ENCODE measurements at regions of chr10 and their contacts with region 1.

Region 1: GRCh38 chr10:30231071-30231652 is 117.9 kb downstream of the MTPAP start:
- DNase-seq: no peak
- H3K4me3 ChIP-seq: no peak overlapping the region
- H3K27ac ChIP-seq: no peak overlapping the region
- H3K4me1 ChIP-seq: no peaks in the 10 kb centered on the region
- H3K27me3 ChIP-seq: no peaks in the 10 kb centered on the region
- CTCF ChIP-seq: no peak
- EP300 ChIP-seq: no peak
- POLR2A ChIP-seq: no peak

Region 2: GRCh38 chr10:29998142-29998808 is 232.9 kb before region 1 on chr10:
- in situ Hi-C with region 1: loop called in 3 of 4 experiments (anchors 10 to 25 kb)
- intact Hi-C with region 1: no loop called
- DNase-seq: peak; percentile 76
- H3K4me3 ChIP-seq: no peak overlapping the region
- H3K27ac ChIP-seq: no peak overlapping the region
- H3K4me1 ChIP-seq: peaks cover 5 to 24% (median 13%) of the 10 kb centered on the region in 4 donors
- H3K27me3 ChIP-seq: no peaks in the 10 kb centered on the region
- CTCF ChIP-seq: peak; percentile 87 to 98 (median 96)
- EP300 ChIP-seq: no peak
- POLR2A ChIP-seq: no peak

Region 3: DNA sequence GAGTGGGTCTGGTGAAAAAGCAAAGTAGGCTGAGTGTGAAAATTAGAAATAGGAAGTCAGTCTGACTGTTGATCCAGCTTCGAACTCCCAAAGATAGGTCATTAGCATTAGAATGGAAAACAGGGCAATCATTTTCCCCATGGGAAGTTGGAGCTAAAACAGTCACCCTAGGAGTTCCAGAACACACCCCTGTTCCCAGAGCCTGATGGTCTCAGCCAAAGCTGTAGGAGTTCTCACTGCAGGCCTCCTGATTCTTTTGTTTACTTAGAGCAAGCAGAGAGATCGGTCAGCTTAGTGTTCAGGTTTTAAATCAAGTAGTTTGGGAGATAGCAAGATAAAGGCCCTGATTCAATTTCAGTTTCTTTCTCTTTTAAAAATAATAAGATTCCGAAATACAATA is 143.0 kb before region 1 on chr10:
- in situ Hi-C with region 1: loop called in 1 of 4 experiments (anchors 10 kb)
- intact Hi-C with region 1: no loop called
- DNase-seq: no peak
- H3K4me3 ChIP-seq: no peak overlapping the region
- H3K27ac ChIP-seq: no peak overlapping the region
- H3K4me1 ChIP-seq: peaks cover 0 to 5% (median 0%) of the 10 kb centered on the region in 4 donors
- H3K27me3 ChIP-seq: no peaks in the 10 kb centered on the region
- CTCF ChIP-seq: no peak
- EP300 ChIP-seq: no peak
- POLR2A ChIP-seq: no peak

Measured in transverse colon (tissue), 4 donors.